Lower leg skin (tissue), 4 donors: ENCODE measurements at regions of chr14 and their contacts with region 1.

Region 1: GRCh38 chr14:68788996-68789820 is 3.7 kb downstream of the ZFP36L1 start:
- DNase-seq: peak; percentile 87 to 97
- H3K4me3 ChIP-seq: peak overlapping the region; percentile 97
- CTCF ChIP-seq: no peak
- POLR2A ChIP-seq: no peak

Region 2: DNA sequence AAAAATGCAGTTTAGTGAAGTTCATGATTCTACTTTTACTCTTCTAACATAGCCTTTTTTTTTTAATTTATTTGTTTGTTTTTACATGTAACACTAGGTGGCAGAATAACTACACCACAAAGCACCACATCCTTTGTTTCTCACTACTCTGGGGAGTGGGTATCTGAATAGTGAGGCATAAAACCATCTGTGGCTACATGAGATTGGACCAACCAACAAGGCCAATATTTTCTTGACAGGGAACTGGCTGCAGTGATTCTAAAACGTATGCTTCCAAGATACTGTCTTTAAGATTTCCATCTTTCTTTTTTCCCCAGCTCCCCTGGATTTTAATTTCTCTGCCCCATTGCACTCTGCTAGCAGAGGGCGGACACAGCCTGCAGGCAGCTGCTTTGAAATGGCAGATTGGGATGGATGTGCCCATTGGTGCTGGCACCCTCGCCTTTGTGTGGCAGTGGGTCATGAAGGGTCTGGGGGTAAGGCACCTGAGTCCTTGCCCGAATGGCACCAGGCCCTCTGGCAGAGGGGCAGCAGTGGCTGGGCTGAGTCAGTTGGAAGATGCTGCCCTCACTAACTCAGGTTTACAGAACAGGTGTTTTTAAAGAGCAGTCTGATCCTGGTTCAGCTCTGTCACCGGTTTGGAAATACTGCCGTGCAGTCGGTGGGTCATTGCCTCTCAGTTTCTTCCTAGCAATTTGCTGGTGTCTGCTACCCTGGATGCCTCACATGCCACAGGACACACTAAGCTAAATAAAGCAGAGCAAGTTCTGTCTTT is 540.5 kb before region 1 on chr14:
- intact Hi-C with region 1: loop called (anchors 5 kb)
- DNase-seq: peak in 1 of 2 donors; percentile 86
- H3K4me3 ChIP-seq: no peak overlapping the region
- CTCF ChIP-seq: no peak
- POLR2A ChIP-seq: no peak

Region 3: DNA sequence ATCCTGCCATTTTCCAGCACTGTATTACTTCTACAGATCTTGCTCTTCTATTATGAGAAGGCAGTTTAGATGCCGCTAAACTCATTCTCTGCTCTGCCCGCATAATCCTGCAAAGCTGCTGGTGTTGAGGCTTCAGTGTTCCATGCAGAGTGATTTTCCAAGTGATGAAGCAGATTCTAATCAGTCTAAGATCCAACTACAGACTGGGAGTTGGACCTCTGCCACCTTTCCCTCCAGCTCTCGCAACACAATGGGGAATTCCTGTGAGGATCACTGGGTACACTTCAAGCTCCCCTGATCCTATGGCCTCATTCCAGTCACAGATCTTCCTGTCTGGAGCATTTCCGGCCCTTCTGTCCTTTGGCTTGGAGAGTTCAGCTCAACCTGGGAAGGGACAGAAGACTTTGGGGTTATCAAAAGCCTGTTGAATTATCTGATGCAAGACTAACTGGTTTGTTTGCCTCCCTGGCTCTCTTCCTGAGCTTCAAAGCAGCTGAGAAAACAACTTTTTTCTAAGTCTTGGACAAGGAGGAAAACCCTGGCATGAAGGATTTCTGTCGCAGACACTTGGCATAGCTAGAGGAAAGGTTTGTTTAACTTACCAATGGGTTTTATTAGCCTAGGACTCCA is 330.3 kb before region 1 on chr14:
- intact Hi-C with region 1: loop called (anchors 10 kb)
- DNase-seq: no peak
- H3K4me3 ChIP-seq: no peak overlapping the region
- CTCF ChIP-seq: peak in 1 of 3 donors; percentile 95
- POLR2A ChIP-seq: no peak

Region 4: DNA sequence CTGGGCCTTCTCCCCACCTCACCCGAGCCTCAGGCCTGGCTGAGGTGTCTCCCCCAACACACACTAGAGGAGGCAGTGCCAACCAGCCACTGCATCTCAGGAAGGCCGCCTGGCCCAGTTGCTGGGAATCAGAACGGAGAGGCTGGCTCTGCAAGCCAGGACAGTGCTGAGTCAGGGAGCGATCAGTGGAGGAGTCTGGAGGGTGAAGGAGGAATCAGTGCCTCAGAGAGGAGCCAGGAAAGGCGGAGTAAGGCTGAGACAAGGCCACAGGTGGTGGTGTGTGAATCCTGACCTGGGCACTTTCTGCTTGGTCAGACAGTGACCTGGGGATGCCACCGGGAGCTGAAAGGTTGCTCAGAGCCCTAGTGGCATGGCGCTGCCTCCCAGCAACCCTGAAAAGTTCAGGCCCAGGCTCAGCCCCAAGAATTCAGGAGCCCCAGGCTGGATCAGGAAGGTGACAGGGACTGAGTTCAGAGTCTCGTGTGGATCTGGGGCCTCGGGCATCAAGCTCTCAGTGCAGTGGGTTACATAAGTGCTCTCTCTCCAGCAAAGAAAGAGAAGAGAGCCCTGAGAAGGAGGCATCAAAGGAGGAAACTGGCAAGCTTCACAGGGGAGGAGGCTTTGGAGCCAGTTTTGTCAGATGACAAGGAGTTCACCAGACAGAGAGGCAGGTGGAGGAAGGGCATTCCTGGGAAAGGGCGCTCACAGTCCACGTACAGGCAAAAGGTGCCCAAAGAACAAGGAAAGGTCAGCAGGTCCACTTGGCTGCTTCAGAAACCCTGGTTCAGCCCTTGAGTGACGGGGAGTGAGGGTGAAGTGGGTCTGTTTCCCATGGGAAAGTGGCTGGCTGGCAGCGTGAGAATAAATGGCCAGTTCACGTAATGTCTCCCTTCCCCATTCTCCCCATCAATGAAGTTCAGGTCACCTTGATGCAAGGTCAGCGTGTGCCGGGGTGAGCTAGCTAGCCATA is 84.2 kb before region 1 on chr14:
- intact Hi-C with region 1: loop called (anchors 5 kb)
- DNase-seq: peak; percentile 74 to 88
- H3K4me3 ChIP-seq: no peak overlapping the region
- CTCF ChIP-seq: no peak
- POLR2A ChIP-seq: no peak